OCI-LY7 (cell line): ENCODE measurements at regions of chr16 and their contacts with region 1.

Region 1: DNA sequence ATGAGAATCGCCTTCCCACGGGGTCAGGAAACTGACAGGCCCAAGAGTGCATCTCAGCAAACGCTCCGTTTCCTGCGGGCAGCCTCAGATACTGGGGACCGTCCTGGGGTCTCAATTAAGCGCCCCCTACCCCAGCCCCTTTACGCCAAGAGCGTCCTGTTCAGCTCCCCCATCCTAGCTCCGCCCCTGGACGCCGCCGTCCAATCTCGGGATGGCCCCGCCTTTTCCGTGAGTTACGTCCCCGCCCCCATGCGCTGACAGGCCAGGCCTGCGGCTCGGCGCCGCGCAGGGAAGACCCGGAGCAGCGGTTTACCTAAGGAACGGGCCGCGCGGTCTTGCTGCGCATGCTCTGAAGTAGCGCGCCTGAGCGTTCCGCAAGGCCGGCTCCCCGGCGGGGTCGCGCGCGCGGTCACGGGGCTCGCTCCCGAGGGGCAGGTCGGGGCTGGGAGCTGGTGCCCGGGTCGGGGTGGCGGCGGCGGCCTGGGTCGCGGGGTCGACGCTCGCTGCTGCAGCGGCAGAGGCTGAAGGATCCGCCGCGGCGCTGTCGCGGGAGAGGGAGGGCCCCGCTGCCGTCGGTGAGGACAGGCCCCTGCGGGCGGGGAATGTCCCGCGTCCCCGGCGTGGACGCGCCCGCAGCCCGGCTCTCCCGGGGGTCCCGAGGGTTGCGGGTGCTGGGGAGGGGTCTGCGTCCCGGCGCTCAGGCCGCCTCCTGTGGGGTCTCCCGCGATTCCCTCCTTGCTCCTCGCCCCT is at the start of gene FLYWCH1:
- DNase-seq: peak; percentile 100
- H3K4me3 ChIP-seq: peak within 1 kb of the TSS; percentile 77
- H3K27ac ChIP-seq: no peak within 1 kb of the TSS
- H3K4me1 ChIP-seq: peaks cover 12% of the 10 kb centered on the region
- CTCF ChIP-seq: no peak; the same call in 1 of the 2 replicates
- total RNA-seq, gene FLYWCH1: 25.3 and 26.1 TPM in 2 replicates

Region 2: DNA sequence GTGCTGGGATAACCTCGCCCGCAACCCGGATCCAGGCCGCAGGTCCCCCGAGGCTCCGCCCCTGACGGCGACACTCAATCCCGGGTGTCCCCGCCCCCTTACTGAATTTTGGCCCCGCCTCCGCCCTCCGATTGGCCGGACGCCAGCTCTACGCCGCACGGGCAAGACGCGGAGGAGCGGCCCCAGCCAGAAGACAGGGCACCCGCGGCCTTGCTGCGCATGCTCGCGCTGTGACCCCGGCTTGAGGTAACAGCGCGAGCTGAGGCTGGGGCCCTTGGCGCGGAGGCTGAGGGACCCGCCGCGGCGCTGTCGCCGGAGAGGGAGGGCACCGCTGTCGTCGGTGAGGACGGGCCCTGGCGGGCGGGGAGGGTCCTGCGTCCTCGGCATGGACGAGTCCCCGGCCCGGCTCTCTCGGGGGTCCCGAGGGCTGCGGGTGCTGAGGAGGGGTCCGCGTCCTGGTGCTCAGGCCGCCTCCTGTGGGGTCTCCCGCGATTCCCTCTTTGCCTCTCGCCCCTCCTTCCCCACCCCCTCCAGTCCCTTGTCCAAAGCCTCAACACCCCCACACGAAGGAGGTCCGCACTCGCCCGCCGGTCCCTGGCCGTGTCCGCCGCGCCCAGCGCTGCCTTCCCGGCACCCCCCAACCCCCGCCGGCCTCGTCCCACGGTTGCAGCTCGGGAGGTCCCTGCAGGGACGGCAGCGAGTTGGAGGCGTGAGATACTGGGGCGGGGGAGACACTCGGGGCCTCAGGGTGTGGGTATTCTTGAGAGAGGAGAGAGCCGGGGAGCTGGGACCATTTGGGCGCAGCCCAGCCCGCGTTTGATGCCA is 28.5 kb before region 1 on chr16 and contains the start of gene FLYWCH2:
- CTCF ChIA-PET with region 1: interaction called, 3 read pairs
- POLR2A ChIA-PET with region 1: interaction called, 10 read pairs
- intact Hi-C with region 1: no loop called
- DNase-seq: peak; percentile 97
- H3K4me3 ChIP-seq: peak within 1 kb of the TSS; percentile 84
- H3K27ac ChIP-seq: peak within 1 kb of the TSS; percentile 52
- H3K4me1 ChIP-seq: peaks cover 7% of the 10 kb centered on the region
- CTCF ChIP-seq: no peak
- total RNA-seq, gene FLYWCH2: 38.7 and 44.9 TPM in 2 replicates

Region 3: DNA sequence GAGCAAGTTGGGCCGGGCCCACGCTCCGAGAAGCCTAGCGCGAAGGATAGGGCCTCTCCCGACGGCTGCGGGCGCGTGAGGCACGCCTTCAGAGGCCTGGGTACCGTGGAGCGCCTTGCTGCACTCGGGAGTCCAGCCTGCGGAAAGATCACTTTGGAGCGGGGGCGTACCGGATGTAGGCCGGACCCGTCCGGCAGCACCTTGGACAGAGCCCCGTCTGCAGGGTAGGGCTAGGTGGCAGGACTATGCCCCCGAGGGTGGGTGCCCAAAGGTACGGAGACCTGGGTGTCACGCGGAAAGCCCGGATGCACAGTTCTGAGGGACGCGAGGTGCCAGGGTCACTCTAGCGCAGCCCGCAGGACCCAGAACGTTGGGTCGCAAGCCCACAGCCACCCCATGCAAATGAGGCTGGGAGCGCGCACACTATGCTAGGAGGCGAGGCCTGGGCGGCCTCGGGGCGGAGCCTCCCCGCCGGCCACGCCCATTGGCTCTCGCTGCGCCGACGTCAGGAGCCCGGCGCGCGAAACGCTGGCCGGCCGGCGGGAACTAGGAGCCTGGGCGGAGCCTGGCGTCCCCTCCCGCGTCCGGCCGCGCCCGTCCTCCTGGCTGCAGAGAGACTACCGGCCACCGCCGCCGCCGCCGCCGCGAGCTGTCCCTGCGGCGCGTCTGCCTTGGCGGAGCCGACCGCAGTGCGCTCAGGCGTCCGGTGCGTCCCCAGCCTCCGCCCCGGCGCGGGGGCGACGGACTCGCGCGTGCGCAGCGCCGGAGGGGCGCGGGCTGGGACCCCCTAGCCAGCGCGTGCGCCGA is 57.2 kb after region 1 on chr16 and contains the start of gene PAQR4:
- CTCF ChIA-PET with region 1: no interaction called
- POLR2A ChIA-PET with region 1: no interaction called
- intact Hi-C with region 1: no loop called
- DNase-seq: peak; percentile 94
- H3K4me3 ChIP-seq: peak within 1 kb of the TSS; percentile 99
- H3K27ac ChIP-seq: peak within 1 kb of the TSS; percentile 64
- H3K4me1 ChIP-seq: peaks cover 57% of the 10 kb centered on the region
- CTCF ChIP-seq: no peak
- total RNA-seq, gene PAQR4: 38.1 and 49.1 TPM in 2 replicates

Region 4: DNA sequence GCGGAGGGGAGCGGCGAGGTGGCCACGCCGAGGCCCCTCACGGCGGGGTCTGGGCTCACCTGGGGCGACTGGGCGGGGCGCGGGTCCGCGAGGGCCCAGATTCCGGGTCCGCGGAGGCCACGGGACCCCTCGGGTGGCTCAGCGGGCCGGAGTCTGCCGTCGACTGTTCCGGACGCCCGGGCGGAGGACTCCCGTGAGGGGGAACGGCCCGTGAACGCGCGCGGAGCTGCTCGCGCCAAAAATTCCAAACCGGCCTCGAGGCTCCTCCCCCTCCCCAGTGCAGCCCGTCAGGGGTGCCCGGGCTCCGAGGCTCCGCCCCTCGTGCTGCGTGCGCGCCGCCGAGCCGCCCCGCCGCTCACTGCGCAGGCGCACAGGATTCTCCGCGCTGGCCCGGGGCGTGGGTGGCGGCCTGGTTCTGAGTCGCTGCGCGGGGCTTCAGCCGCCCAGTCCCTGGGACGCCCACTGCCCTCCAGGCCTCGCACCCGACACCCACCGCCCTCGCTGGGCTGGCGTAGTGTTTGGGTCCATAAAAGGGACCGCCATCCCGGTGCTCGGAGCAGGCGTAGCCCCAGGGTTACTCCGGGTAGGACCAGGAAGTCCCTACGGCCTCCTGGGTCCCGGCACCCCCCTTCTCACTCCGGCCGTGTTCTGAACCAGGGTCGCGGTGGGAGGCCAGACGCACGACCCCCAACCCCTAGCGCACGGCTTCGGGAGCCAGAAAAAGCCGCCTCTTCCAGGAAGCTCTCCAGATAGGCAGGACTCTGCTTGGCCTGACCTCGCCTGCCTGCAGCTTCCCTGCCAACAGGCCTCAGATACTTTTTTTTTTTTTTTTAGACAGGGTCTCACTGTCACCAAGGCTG is 68.7 kb after region 1 on chr16 and contains the start of gene PKMYT1:
- CTCF ChIA-PET with region 1: no interaction called
- POLR2A ChIA-PET with region 1: no interaction called
- intact Hi-C with region 1: loop called (anchors 5 kb)
- DNase-seq: peak; percentile 94
- H3K4me3 ChIP-seq: peak within 1 kb of the TSS; percentile 80
- H3K27ac ChIP-seq: peak within 1 kb of the TSS; percentile 67
- H3K4me1 ChIP-seq: peaks cover 48% of the 10 kb centered on the region
- CTCF ChIP-seq: no peak
- total RNA-seq, gene PKMYT1: 80.2 and 104 TPM in 2 replicates